HepG2 (cell line): ENCODE measurements at regions of chr14 and their contacts with region 1.

Region 1: DNA sequence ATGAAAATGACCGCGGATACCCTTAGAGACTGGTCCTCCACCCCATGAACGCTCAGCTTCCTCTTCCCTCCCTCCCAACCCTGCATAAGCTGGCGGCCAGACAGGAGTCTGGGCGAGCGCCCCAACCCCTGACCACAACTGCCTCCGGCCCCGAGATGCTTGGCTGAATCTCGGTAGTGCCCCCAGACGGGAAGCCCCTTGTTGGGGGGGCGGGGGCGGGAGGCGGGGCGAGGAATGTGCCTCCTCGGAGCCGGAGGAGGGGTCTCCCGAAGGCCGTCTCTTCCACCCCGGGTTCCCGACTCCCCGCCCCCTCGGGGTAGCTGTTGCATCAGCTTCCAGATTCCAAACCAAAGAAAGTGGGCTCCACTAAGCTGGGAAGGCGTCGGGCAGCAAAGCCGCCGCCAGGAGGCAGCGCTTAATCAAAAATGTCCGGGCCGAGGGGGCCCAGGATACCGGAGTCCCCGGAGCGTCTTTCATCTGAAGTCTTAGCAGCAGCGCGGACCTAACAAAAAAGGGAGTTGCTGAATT is 7.1 kb upstream of the MRPL52 start:
- DNase-seq: peak; percentile 78
- ATAC-seq: peak; percentile 70
- H3K4me3 ChIP-seq: peak overlapping the region; percentile 12 to 53 (median 27); a peak in 5 of 6 replicates
- H3K27ac ChIP-seq: no peak overlapping the region
- H3K4me1 ChIP-seq: peaks cover 67% of the 10 kb centered on the region
- H3K27me3 ChIP-seq: 0 out of 5 replicates have a peak, but pooled peaks cover 0 to 3% of the 10 kb centered on the region in 2 experiments
- CTCF ChIP-seq: peak; percentile 93
- EP300 ChIP-seq: 0 out of 4 replicates have a peak, but pooled peaks of 1 of the 2 experiments have one; percentile 19
- POLR2A ChIP-seq: no peak
- RAD21 ChIP-seq: peak; percentile 97

Region 2: GRCh38 chr14:22781586-22781991 is 41.0 kb before region 1 on chr14:
- CTCF ChIA-PET with region 1: interaction called, 8 read pairs
- POLR2A ChIA-PET with region 1: interaction called, 6 read pairs
- in situ Hi-C with region 1: no loop called
- intact Hi-C with region 1: loop called (anchors 1 kb)
- DNase-seq: no peak
- ATAC-seq: no peak
- H3K4me3 ChIP-seq: no peak overlapping the region
- H3K27ac ChIP-seq: no peak overlapping the region
- H3K4me1 ChIP-seq: peaks cover 7% of the 10 kb centered on the region; the same call in 1 of the 2 replicates
- H3K27me3 ChIP-seq: no peaks in the 10 kb centered on the region
- CTCF ChIP-seq: no peak
- EP300 ChIP-seq: no peak
- POLR2A ChIP-seq: no peak
- RAD21 ChIP-seq: no peak

Region 3: DNA sequence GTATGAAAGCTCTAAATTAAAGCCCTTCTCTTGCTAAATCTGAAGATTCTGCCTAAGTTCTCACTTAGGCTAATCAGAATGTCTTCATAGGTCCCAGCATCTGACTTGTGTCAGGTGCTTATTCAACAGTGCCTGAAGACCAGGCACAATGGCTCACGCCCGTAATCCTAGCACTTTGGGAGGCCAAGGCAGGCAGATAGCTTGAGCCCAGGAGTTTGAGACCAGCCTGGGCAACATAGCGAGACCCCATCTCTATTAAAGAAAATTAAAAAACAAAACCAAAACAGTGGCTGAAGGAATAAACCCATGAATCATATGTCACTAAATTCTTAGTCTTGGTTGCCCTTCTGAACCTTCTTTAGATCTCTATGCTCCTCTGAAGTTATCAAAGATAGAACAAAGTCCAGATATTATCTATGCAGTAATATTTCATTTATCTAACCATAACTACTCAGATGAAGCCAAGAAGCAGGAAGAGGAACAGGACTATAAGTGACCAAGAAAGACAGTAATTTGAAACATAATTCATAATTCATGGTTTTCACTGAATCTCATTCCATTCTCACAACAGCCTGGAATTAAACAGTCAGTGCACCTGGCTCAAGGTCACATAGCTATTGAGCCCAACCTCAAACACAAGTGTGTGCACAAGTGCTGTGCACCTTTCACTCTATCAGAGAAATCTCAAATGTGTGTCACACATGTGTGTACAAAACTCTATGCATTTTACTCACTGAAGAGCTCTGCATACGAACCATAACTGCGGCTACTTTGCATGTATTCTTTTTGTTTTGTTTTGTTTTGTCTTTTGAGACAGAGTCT is 14.0 kb before region 1 on chr14:
- CTCF ChIA-PET with region 1: interaction called, 4 read pairs
- POLR2A ChIA-PET with region 1: interaction called, 24 read pairs
- in situ Hi-C with region 1: no loop called
- intact Hi-C with region 1: no loop called
- DNase-seq: peak; percentile 52
- ATAC-seq: peak; percentile 15; the same call in 2 of the 3 replicates
- H3K4me3 ChIP-seq: no peak overlapping the region
- H3K27ac ChIP-seq: no peak overlapping the region
- H3K4me1 ChIP-seq: peaks cover 34% of the 10 kb centered on the region
- H3K27me3 ChIP-seq: no peaks in the 10 kb centered on the region
- CTCF ChIP-seq: no peak
- EP300 ChIP-seq: peak in 1 of 2 experiments; percentile 19; a peak in 1 of 4 replicates
- POLR2A ChIP-seq: no peak
- RAD21 ChIP-seq: no peak

Region 4: GRCh38 chr14:22836301-22837113 is 13.9 kb after region 1 on chr14 and contains the start of gene MMP14:
- CTCF ChIA-PET with region 1: no interaction called
- POLR2A ChIA-PET with region 1: interaction called, 27 read pairs
- in situ Hi-C with region 1: no loop called
- intact Hi-C with region 1: no loop called
- DNase-seq: no peak
- ATAC-seq: peak; percentile 11
- H3K4me3 ChIP-seq: peak within 1 kb of the TSS; percentile 55 to 71 (median 57)
- H3K27ac ChIP-seq: no peak within 1 kb of the TSS
- H3K4me1 ChIP-seq: peaks cover 43% of the 10 kb centered on the region
- H3K27me3 ChIP-seq: no peaks in the 10 kb centered on the region
- CTCF ChIP-seq: peak; percentile 42; the same call in 1 of the 2 replicates
- EP300 ChIP-seq: no peak
- POLR2A ChIP-seq: 0 out of 4 replicates have a peak, but pooled peaks of 1 of the 2 experiments have one; percentile 8
- RAD21 ChIP-seq: no peak
- total RNA-seq, gene MMP14: 1.6 and 5.2 TPM in 2 replicates

Region 5: DNA sequence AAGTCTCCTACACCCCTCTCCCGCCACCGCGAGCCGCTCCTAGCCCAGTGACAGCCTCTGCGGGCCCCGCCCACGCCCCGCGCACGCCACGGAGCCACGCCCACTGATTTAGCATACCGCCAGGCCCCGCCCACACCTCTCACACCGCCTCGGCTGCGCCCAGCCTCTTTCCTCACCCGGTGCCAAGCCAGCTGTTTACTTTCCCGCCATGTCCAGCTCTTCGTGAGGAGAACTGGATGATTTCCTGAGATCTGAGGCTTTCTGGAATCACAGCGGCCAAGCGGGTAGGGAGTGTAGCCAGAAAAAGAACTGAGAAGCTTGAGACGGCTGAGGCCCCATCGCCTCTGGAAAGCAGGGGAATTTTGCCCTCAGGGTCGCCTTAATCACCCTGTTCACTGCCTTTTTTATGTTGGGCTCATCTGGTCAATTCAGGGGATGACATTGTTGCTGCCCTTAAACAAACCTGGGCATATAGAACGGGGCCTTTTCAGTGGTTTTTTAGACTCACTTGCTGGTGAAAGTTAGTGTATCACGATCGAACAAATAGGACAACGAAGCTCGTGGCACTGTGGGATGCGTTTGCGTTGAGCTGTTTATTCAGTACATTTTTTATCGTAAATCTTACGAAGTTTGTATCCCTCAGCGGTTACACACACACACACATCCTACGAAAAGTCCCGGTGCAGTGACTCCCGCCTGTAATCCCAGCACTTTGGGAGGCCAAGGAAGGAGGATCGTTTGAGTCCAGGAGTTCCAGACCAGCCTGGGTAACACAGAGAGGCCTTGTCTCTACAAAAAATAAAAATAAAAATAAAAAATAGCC is 415.3 kb after region 1 on chr14 and contains the start of gene RNF212B:
- CTCF ChIA-PET with region 1: no interaction called
- POLR2A ChIA-PET with region 1: no interaction called
- in situ Hi-C with region 1: no loop called
- intact Hi-C with region 1: no loop called
- DNase-seq: peak; percentile 80
- ATAC-seq: peak; percentile 100
- H3K4me3 ChIP-seq: peak within 1 kb of the TSS in 1 of 3 experiments; percentile 56; a peak in 1 of 6 replicates
- H3K27ac ChIP-seq: no peak within 1 kb of the TSS
- H3K4me1 ChIP-seq: peaks cover 10% of the 10 kb centered on the region
- H3K27me3 ChIP-seq: peaks cover 0 to 2% of the 10 kb centered on the region in 2 experiments; a peak in 2 of 5 replicates
- CTCF ChIP-seq: peak; percentile 40
- EP300 ChIP-seq: no peak
- POLR2A ChIP-seq: no peak
- RAD21 ChIP-seq: no peak
- total RNA-seq, gene RNF212B: not detected in 2 replicates